PC-9 (cell line): ENCODE measurements at regions of chr5 and their contacts with region 1.

Region 1: DNA sequence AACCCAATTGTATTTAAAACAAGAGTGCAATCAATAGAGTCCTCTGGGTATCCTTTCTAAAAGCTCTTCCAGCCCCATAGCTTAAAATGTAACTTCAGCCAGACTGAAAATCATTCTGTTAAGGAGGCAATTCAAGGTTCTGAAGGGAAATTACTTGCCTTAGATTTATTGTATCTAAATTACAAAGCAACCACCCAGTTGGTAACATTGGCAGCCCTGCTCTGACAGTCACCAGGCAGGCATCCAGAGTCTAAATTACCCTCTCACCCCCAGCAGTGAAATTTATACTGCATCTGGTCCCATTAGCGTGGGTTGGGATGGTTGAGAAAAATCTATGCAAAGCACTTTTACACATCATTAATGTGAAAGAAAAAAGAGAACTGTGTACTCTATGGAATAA is 514.7 kb downstream of the MTRR start:
- DNase-seq: peak in 1 of 2 experiments; percentile 29
- H3K4me3 ChIP-seq: no peak overlapping the region
- H3K27ac ChIP-seq: no peak overlapping the region
- H3K4me1 ChIP-seq: no peaks in the 10 kb centered on the region
- H3K27me3 ChIP-seq: 0 out of 2 replicates have a peak, but pooled peaks cover 4% of the 10 kb centered on the region
- CTCF ChIP-seq: no peak

Region 2: DNA sequence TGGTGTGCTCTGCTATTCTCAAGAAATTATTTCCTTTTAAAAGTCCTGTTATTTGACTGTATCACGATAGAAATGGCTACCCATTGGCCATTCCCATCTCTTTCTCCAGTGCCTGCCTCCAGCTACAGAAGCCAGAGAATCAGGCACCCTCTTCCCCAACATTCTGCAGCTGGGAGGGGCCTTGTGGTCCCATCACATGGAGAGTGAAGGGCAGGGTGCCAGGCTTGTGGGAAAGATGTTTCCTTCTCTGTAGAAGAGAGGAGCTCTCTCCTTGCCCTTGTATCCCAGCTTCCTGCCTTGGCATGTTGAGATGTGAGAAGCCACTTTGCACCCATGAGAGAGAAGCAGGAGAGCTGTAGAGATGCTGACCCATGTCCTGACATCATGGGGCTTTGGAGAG is 49.6 kb before region 1 on chr5:
- CTCF ChIA-PET with region 1: no interaction called
- POLR2A ChIA-PET with region 1: interaction called, 11 read pairs
- intact Hi-C with region 1: no loop called
- DNase-seq: no peak
- H3K4me3 ChIP-seq: no peak overlapping the region
- H3K27ac ChIP-seq: no peak overlapping the region
- H3K4me1 ChIP-seq: no peaks in the 10 kb centered on the region
- H3K27me3 ChIP-seq: peaks cover 56% of the 10 kb centered on the region
- CTCF ChIP-seq: no peak

Region 3: GRCh38 chr5:8396756-8397155 is 13.1 kb after region 1 on chr5:
- CTCF ChIA-PET with region 1: no interaction called
- POLR2A ChIA-PET with region 1: no interaction called
- intact Hi-C with region 1: no loop called
- DNase-seq: peak in 1 of 2 experiments; percentile 26
- H3K4me3 ChIP-seq: no peak overlapping the region
- H3K27ac ChIP-seq: no peak overlapping the region
- H3K4me1 ChIP-seq: no peaks in the 10 kb centered on the region
- H3K27me3 ChIP-seq: peaks cover 22% of the 10 kb centered on the region
- CTCF ChIP-seq: no peak

Region 4: DNA sequence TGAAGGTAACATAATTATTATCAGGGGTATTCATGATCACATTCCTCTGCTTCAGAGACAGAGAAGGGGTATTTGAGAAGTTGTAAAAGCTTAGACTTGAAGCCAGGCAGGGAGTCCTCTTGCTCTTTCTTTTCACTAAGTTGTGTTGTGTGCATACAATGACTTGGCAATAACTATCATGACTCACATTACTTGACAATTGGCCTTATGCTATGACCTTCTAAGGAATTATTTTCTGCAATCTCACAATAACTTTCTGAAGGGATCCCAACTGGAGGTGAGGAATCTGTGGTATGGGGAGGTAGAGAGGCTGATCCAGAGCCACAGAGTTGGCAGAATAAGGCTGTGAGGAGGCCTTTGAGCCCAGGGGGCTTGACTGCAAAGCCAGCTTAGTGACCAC is 107.6 kb after region 1 on chr5:
- CTCF ChIA-PET with region 1: no interaction called
- POLR2A ChIA-PET with region 1: no interaction called
- intact Hi-C with region 1: no loop called
- DNase-seq: no peak
- H3K4me3 ChIP-seq: no peak overlapping the region
- H3K27ac ChIP-seq: no peak overlapping the region
- H3K4me1 ChIP-seq: no peaks in the 10 kb centered on the region
- H3K27me3 ChIP-seq: no peaks in the 10 kb centered on the region; the same call in 1 of the 2 replicates
- CTCF ChIP-seq: no peak